Right ventricle myocardium inferior (tissue), 1 donor: ENCODE measurements at regions of chr12 and their contacts with region 1.

Region 1: DNA sequence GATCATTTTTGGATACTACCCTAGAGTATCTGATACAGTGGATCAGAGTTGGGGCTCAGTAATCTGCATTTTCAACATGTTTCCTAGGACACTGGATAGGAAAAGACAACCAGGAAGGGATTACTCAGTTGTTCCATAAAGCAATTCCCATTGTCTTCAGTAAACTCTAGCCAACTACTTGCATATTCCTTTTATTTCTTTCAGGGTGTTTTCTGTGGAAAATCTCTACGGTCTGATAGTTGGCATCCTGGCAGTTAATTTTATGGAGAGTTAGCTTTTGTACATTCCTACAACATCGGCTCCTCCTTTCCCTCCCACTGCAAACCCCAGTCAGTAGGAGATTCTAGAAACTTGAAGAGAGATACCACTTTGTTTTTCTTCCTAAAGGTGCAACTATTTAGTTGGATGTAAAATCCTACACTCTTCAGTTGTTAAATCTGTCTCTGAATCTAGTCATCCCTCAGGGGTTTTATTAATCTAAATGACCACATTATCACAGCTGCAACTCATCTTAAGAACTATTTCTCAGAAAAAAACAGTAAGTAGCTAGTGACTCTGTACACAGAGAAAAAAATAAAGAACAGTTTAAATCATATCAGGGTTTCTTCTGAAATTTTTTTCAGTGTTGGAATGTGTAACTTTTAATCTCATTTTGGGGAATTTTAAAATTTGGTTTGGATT is 103.9 kb downstream of the PDE3A start:
- DNase-seq: no peak
- ATAC-seq: no peak

Region 2: DNA sequence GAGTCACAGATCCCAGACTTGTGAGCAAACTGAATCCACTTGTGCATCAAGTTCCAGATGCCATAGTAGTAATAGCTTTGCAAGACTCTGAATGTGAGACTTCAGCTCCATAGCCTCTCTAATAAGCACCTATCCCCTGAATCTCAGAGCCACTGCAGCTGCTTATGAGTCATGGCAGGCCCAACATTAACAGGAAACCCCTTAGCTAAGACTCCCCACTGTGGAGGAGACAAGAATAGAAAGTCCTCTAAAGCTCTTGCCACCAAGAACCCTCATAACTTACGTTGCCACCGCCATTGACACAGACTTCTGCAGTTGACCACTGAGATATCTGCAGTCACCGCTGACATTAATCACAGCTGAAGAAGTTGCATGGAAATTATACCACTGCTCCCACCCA is 166.8 kb before region 1 on chr12:
- intact Hi-C with region 1: no loop called
- DNase-seq: no peak
- ATAC-seq: no peak

Region 3: DNA sequence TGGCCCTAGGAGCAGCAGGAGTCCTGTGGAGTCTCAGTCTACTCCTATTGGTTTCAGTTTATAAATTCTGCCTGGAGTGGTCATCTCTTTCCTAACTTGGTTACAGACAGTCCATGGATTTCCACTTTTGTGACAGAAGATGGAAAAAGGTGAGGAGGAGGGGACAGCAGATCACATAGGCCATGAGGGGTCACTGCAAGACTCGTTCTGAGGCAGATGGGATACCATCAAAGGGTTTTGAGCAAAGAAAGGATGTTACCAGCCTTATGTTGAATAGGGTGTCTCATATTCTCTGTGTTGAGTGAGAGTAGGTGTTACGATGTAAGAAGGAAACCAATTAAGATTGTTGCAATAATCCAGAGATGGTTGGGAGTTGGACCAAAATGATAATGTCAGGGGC is 88.6 kb before region 1 on chr12:
- intact Hi-C with region 1: loop called (anchors 5 kb)
- DNase-seq: no peak
- ATAC-seq: no peak

Region 4: GRCh38 chr12:20514598-20515275 is 42.5 kb after region 1 on chr12:
- intact Hi-C with region 1: loop called (anchors 5 kb)
- DNase-seq: no peak
- ATAC-seq: no peak

Region 5: GRCh38 chr12:20549107-20549719 is 77.0 kb after region 1 on chr12:
- intact Hi-C with region 1: loop called (anchors 5 kb)
- DNase-seq: no peak
- ATAC-seq: peak; percentile 40